ENCODE measurements at regions of chr2 and their contacts with region 1.

Region 1: DNA sequence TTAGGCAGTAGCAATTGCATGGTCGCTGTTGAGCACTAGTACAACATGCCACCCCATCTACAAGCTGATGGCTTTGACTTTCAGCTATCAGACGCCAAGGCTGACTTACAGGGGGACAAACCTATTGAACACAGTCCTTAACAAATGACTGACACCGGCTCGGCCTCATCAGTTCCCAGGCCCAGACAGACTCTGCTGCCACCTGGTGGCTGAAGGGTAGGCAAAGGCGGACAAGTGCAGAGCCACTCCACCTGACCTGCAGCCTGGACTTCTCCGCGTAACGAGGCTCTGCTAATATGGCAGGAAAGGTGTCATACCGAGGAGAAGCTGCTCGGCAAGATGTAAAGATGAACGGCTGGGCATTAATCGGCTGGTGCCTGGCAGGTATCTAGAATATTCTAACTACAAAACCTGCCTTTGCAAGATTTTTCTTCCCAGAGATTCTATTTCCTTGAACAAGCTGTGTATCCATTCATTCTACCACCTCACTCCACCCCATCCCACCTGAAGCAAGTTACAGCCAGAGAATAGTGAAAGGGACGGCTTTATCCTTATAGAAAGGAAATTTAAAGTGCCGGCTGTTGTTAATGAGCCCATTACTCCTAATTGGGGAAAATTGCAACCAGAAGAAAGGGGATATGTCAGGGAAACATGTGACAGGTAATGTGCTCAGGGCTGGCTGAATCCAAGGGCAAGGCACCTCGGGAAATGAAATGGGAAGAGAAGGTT is 67.4 kb downstream of the STEAP3 start:
- DNase-seq: peak; percentile 66 to 89
- H3K4me3 ChIP-seq: no peak overlapping the region
- H3K27ac ChIP-seq: no peak overlapping the region
- H3K4me1 ChIP-seq: peaks cover 0 to 2% (median 0%) of the 10 kb centered on the region in 4 experiments; a peak in 2 of 7 replicates
- H3K27me3 ChIP-seq: no peaks in the 10 kb centered on the region
- CTCF ChIP-seq: peak; percentile 92 to 98 (median 98)
- EP300 ChIP-seq: no peak
- POLR2A ChIP-seq: no peak
- RAD21 ChIP-seq: peak; percentile 97 to 99

Region 2: DNA sequence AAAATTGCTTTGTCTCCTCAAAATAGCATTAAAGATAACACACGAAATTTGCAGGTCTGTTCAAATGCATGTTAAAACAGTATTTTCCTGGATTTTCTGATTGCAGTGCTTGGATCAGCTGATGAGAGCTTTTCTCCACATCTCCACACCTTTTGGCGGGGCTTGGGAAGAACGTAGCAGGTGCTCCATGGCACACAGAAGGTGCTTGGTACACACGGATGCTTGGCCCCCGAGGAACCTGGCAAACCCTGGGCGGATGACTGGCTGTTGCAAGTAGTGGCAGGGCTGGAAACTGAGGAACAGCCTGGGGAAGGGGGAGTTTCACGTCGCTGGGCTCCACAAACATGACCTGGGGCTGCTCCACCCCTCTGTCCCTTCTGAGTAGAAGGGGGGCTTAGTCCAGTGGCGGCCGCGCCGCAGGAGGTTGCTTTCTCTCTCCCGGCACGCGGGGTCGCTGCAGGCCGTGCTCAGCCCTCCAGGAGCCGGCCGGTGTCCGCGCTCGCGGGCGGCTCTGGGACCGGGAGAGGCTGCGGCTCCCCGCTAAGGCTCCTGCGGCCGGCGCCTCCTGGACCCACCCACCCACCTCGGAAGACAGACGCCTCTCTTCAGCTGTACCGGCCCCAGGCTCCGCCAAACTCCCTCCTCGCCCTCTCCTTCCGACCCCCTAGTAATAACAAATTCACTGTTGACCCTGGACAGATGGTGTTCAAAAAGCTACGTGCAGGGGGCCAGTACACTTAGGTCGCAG is 279.7 kb before region 1 on chr2:
- CTCF ChIA-PET with region 1: interaction called, 17 read pairs
- POLR2A ChIA-PET with region 1: no interaction called
- DNase-seq: peak; percentile 21 to 87
- H3K4me3 ChIP-seq: peak overlapping the region in 3 of 4 experiments; percentile 6 to 51 (median 19); a peak in 4 of 8 replicates
- H3K27ac ChIP-seq: no peak overlapping the region
- H3K4me1 ChIP-seq: peaks cover 0 to 3% (median under 1%) of the 10 kb centered on the region in 4 experiments; a peak in 4 of 7 replicates
- H3K27me3 ChIP-seq: peaks cover 0 to 4% (median 3%) of the 10 kb centered on the region in 4 experiments; a peak in 5 of 7 replicates
- CTCF ChIP-seq: peak; percentile 73 to 80 (median 74)
- EP300 ChIP-seq: no peak
- POLR2A ChIP-seq: no peak
- RAD21 ChIP-seq: peak; percentile 88 to 92

Region 3: DNA sequence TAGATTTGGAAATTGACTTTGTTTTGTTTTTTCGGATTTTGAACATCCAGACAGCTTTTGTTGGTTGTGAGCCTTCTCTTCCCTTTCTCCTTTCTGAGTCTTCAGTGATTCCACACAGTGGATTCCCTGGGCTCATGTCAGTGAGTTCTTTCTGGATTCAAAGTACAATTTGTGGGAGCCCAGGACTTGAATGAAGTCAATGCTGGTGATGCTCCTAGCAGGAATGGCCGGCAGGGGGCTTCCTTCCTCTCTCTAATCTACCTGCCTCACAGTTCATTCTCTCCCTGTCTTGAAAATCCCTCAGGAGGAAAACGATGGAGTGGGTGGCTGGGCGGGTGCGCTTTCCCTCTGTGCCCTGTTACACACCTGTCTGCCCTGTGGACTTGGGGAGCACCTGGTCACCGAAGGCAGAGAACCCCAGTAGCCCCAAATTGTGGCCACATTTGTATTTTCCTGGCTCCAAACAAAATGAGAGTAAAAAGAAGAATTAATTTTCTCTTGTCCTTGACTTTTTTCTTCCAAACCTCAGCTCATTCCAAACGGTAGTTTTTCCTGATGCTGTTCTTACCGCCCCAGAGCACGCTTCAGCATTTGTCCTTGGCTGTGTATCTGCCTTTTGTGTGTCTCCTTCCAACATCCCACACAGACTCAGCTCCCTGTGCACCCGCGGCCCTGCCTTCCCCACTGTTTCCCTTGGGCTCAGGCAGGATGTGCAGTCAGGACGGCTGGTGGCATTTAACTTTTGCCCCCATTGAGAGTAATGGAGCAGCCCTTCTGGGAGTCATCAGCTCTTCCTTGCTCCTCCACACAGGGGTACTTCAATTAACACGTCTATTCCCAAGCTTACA is 262.5 kb before region 1 on chr2:
- CTCF ChIA-PET with region 1: interaction called, 50 read pairs
- POLR2A ChIA-PET with region 1: no interaction called
- DNase-seq: peak in 1 of 2 experiments; percentile 84
- H3K4me3 ChIP-seq: no peak overlapping the region
- H3K27ac ChIP-seq: no peak overlapping the region
- H3K4me1 ChIP-seq: no peaks in the 10 kb centered on the region; a peak in 1 of 7 replicates
- H3K27me3 ChIP-seq: no peaks in the 10 kb centered on the region
- CTCF ChIP-seq: peak; percentile 59 to 78 (median 62)
- EP300 ChIP-seq: no peak
- POLR2A ChIP-seq: no peak
- RAD21 ChIP-seq: peak; percentile 66 to 81

Region 4: GRCh38 chr2:119190722-119191121 is 100.3 kb before region 1 on chr2:
- CTCF ChIA-PET with region 1: interaction called, 10 read pairs
- POLR2A ChIA-PET with region 1: no interaction called
- DNase-seq: no peak
- H3K4me3 ChIP-seq: no peak overlapping the region
- H3K27ac ChIP-seq: no peak overlapping the region
- H3K4me1 ChIP-seq: no peaks in the 10 kb centered on the region; a peak in 1 of 7 replicates
- H3K27me3 ChIP-seq: no peaks in the 10 kb centered on the region; a peak in 1 of 7 replicates
- CTCF ChIP-seq: no peak
- EP300 ChIP-seq: no peak
- POLR2A ChIP-seq: no peak
- RAD21 ChIP-seq: no peak

Region 5: GRCh38 chr2:119218478-119219064 is 72.5 kb before region 1 on chr2:
- CTCF ChIA-PET with region 1: interaction called, 23 read pairs
- POLR2A ChIA-PET with region 1: no interaction called
- DNase-seq: no peak
- H3K4me3 ChIP-seq: no peak overlapping the region
- H3K27ac ChIP-seq: 0 out of 2 replicates have a peak overlapping the region, but pooled peaks have one; percentile 10
- H3K4me1 ChIP-seq: peaks cover 6 to 28% (median 18%) of the 10 kb centered on the region in 4 experiments
- H3K27me3 ChIP-seq: peaks cover 0 to 3% (median 1%) of the 10 kb centered on the region in 4 experiments; a peak in 3 of 7 replicates
- CTCF ChIP-seq: peak; percentile 46 to 59 (median 52)
- EP300 ChIP-seq: no peak
- POLR2A ChIP-seq: no peak
- RAD21 ChIP-seq: peak; percentile 77 to 84

Region 6: GRCh38 chr2:119234377-119235019 is 56.5 kb before region 1 on chr2:
- CTCF ChIA-PET with region 1: interaction called, 19 read pairs
- POLR2A ChIA-PET with region 1: no interaction called
- DNase-seq: peak in 1 of 2 experiments; percentile 70
- H3K4me3 ChIP-seq: no peak overlapping the region
- H3K27ac ChIP-seq: no peak overlapping the region
- H3K4me1 ChIP-seq: peaks cover 11 to 29% (median 17%) of the 10 kb centered on the region in 4 experiments
- H3K27me3 ChIP-seq: no peaks in the 10 kb centered on the region
- CTCF ChIP-seq: peak; percentile 33 to 61 (median 47)
- EP300 ChIP-seq: no peak
- POLR2A ChIP-seq: no peak
- RAD21 ChIP-seq: peak; percentile 28 to 47

Region 7: GRCh38 chr2:119301413-119301812 is 10.4 kb after region 1 on chr2:
- CTCF ChIA-PET with region 1: interaction called, 19 read pairs
- POLR2A ChIA-PET with region 1: interaction called, 3 read pairs
- DNase-seq: no peak
- H3K4me3 ChIP-seq: no peak overlapping the region
- H3K27ac ChIP-seq: no peak overlapping the region
- H3K4me1 ChIP-seq: peaks cover 0 to 6% (median 0%) of the 10 kb centered on the region in 4 experiments; a peak in 3 of 7 replicates
- H3K27me3 ChIP-seq: no peaks in the 10 kb centered on the region
- CTCF ChIP-seq: no peak
- EP300 ChIP-seq: no peak
- POLR2A ChIP-seq: no peak
- RAD21 ChIP-seq: no peak